HEK293 (cell line): ENCODE measurements at regions of chr17 and their contacts with region 1.

Region 1: DNA sequence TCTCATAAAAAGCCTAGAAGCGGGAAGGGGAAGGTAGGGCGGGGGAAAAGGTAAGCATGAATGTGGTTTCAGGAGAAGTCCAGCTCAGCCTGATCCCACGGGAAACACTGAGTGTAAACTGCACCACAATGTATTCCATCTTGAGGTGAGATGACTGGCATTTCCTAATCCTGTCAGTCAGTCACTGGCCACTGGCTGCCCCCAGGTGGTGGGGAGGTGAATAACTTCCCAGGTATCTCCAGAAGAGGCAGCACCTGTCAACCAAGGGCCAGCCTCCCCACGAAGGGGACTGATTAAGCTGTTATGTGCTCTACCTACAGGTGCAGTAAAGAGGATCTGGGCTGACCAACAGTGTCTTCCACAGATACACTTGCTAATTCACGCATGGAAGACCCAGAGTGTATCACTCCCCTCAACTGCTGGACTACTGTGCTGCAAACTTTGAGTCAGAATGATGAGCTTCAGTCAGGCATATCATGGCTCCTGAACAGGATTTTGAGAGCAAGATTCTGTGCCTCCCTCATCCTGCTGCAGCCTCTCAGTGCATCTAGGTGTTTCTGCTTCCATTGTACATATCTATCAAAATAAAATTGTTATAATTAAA is 108.5 kb upstream of the CCL2 start:
- H3K4me3 ChIP-seq: no peak overlapping the region
- H3K27ac ChIP-seq: no peak overlapping the region
- H3K4me1 ChIP-seq: no peaks in the 10 kb centered on the region
- CTCF ChIP-seq: peak; percentile 74

Region 2: DNA sequence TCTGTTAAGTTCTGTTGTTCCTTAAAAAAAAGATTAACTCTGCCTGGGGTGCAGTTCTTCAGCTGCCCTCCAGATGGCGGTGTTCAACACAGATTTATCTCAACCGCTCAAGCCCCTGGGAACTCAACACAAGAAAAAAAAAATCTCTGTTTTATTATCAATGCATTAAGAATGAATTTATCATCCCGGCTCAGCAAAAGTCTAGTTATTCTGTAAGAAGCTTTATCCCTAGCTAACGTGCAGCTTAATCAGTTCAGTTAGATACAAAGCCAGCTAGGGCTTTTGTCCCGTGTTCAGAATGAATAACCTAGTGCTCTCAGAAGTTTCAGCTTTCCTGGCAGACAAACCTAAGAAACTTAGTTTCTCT is 367.3 kb before region 1 on chr17:
- CTCF ChIA-PET with region 1: interaction called, 52 read pairs
- POLR2A ChIA-PET with region 1: no interaction called
- H3K4me3 ChIP-seq: no peak overlapping the region
- H3K27ac ChIP-seq: no peak overlapping the region
- H3K4me1 ChIP-seq: no peaks in the 10 kb centered on the region
- CTCF ChIP-seq: 0 out of 2 replicates have a peak, but pooled peaks have one; percentile 23

Region 3: DNA sequence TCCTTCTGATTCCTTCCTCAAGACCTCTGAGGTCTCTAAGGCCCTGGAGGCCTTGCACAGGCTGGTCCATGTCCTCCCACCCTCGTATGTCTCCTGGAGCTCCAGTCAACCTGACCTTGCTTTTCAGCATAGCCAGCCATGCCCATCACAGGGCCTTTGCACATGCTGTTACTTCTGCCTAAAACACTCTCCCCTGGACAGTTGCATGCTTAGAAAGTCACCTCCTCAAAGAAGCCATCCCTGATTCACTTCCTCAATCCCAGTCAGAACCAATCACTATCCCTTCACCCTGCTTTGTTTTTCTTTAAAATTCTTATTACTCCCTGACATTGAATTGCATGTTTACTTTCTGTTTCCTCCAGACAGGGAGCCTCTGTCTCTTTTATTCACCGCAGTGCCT is 213.5 kb before region 1 on chr17:
- CTCF ChIA-PET with region 1: interaction called, 59 read pairs
- POLR2A ChIA-PET with region 1: no interaction called
- H3K4me3 ChIP-seq: no peak overlapping the region
- H3K27ac ChIP-seq: no peak overlapping the region
- H3K4me1 ChIP-seq: 0 out of 2 replicates have a peak, but pooled peaks cover 1% of the 10 kb centered on the region
- CTCF ChIP-seq: no peak

Region 4: DNA sequence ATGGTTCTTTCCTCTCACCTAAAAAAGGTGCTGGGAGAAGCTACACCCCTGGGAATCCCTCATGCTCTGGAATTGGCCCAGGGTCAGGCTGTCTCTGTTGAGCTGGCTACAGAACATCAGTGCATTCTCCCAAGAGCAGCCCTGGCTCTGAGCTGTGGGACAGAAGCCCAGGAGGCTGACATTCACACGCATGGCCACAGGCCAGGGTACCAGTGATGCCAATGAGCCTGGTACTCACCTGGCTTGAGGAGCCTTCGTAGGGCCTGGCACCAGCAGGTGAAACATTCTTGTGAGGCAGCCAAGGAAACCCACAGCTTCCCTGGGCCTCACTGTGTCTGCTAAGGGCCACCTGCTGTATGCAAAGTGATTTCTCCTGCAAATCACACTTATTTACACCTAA is 13.2 kb before region 1 on chr17:
- CTCF ChIA-PET with region 1: interaction called, 38 read pairs
- POLR2A ChIA-PET with region 1: no interaction called
- H3K4me3 ChIP-seq: no peak overlapping the region
- H3K27ac ChIP-seq: no peak overlapping the region
- H3K4me1 ChIP-seq: no peaks in the 10 kb centered on the region
- CTCF ChIP-seq: no peak

Region 5: DNA sequence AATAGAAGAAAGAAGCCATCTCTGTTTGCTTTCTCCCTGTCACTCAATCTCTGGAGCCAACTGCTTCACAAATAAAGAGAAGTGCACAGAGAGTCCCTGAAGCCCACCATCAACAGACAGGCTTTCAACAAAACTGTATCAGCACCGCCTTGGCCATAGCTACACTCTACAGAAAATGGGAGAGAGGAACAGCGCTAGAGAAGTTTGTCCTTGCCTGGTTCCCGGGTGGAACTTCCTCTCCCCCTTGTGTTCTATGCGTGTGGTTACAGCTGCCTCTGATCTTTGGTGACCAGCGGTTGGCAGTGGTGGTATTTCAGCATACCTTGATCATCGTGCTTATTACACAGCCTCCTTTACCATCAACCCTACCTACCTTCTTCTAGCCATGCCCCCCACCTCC is 17.1 kb after region 1 on chr17:
- CTCF ChIA-PET with region 1: interaction called, 31 read pairs
- POLR2A ChIA-PET with region 1: no interaction called
- H3K4me3 ChIP-seq: no peak overlapping the region
- H3K27ac ChIP-seq: no peak overlapping the region
- H3K4me1 ChIP-seq: peaks cover 10% of the 10 kb centered on the region; the same call in 1 of the 2 replicates
- CTCF ChIP-seq: peak; percentile 77; the same call in 1 of the 2 replicates